Activated CD4-positive, alpha-beta T cell treated with anti-CD3 and anti-CD28 coated beads for 36 hours (primary cell): ENCODE measurements at regions of chr20 and their contacts with region 1.

Region 1: DNA sequence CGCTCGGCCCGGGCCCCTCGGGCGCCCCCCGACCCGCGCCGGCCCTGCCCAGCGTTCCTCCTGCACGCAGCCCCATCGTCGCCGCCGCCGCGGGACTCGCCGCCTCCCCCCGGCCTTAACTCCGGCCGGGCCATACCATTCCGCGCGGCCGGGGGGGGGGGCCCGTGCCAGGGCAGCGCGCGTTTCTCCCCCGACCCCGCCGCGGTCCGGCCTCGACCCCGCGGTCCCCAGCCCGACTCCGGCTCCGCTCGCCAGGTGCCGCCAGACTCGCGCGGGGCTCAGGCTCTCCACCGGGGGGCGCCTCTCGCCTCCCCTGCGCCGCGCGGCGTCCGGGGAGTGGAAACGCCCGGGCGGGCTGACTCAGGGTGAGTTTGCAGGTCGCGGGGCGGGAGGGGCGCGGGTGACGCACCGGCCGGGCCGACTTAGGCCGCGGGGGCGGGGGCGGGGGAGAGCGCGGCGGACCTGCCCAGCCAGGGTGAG is at the start of gene SRXN1:
- DNase-seq: peak; percentile 91
- ATAC-seq: peak; percentile 93
- H3K4me3 Mint-ChIP-seq: peak within 1 kb of the TSS; percentile 76
- H3K27ac Mint-ChIP-seq: peak within 1 kb of the TSS; percentile 80
- H3K4me1 Mint-ChIP-seq: peaks cover 24% of the 10 kb centered on the region
- H3K27me3 Mint-ChIP-seq: peaks cover 8% of the 10 kb centered on the region
- total RNA-seq, gene SRXN1: 12.6 to 13.5 TPM

Region 2: GRCh38 chr20:675453-676314 is 22.5 kb after region 1 on chr20 and contains the start of gene SCRT2:
- CTCF ChIA-PET with region 1: no interaction called
- POLR2A ChIA-PET with region 1: interaction called, 3 read pairs
- intact Hi-C with region 1: loop called in 1 of 2 experiments (anchors 1 kb)
- DNase-seq: peak; percentile 82
- ATAC-seq: peak; percentile 85
- H3K4me3 Mint-ChIP-seq: no peak within 1 kb of the TSS
- H3K27ac Mint-ChIP-seq: no peak within 1 kb of the TSS
- H3K4me1 Mint-ChIP-seq: peaks cover 4% of the 10 kb centered on the region
- H3K27me3 Mint-ChIP-seq: peaks cover 65% of the 10 kb centered on the region
- total RNA-seq, gene SCRT2: not detected

Region 3: DNA sequence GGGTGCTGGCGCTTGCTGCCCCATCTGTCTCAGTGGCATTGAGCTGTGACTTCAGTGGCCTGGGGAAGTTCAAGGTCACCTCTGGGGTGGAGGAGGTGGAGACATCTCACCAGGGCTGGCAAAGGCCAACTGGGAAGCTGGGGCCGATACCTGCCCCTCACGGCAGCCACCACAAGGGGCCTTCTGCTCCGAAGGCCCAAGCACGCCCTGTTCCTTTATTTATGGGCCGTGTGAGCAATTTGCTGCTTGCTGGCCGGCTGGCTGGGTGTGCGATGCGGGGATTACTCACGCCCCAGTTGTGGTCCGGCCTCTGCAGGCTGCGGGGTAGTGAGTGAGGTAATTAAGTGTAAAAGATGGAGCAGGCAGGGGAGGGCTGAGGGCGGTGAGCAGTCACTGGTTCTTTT is 35.7 kb after region 1 on chr20:
- CTCF ChIA-PET with region 1: no interaction called
- POLR2A ChIA-PET with region 1: no interaction called
- intact Hi-C with region 1: no loop called
- DNase-seq: no peak
- ATAC-seq: no peak
- H3K4me3 Mint-ChIP-seq: no peak overlapping the region
- H3K27ac Mint-ChIP-seq: no peak overlapping the region
- H3K4me1 Mint-ChIP-seq: no peaks in the 10 kb centered on the region
- H3K27me3 Mint-ChIP-seq: peaks cover 6% of the 10 kb centered on the region

Region 4: GRCh38 chr20:728248-728944 is 75.2 kb after region 1 on chr20:
- CTCF ChIA-PET with region 1: no interaction called
- POLR2A ChIA-PET with region 1: no interaction called
- intact Hi-C with region 1: loop called (anchors 1 to 5 kb)
- DNase-seq: peak; percentile 80
- ATAC-seq: peak; percentile 91
- H3K4me3 Mint-ChIP-seq: no peak overlapping the region
- H3K27ac Mint-ChIP-seq: no peak overlapping the region
- H3K4me1 Mint-ChIP-seq: no peaks in the 10 kb centered on the region
- H3K27me3 Mint-ChIP-seq: peaks cover 34% of the 10 kb centered on the region

Region 5: GRCh38 chr20:733861-734260 is 80.7 kb after region 1 on chr20:
- CTCF ChIA-PET with region 1: no interaction called
- POLR2A ChIA-PET with region 1: no interaction called
- intact Hi-C with region 1: loop called (anchors 1 to 5 kb)
- DNase-seq: no peak
- ATAC-seq: no peak
- H3K4me3 Mint-ChIP-seq: no peak overlapping the region
- H3K27ac Mint-ChIP-seq: no peak overlapping the region
- H3K4me1 Mint-ChIP-seq: no peaks in the 10 kb centered on the region
- H3K27me3 Mint-ChIP-seq: peaks cover 15% of the 10 kb centered on the region

Region 6: GRCh38 chr20:739736-740135 is 86.6 kb after region 1 on chr20:
- CTCF ChIA-PET with region 1: no interaction called
- POLR2A ChIA-PET with region 1: no interaction called
- intact Hi-C with region 1: loop called (anchors 1 to 5 kb)
- DNase-seq: no peak
- ATAC-seq: no peak
- H3K4me3 Mint-ChIP-seq: no peak overlapping the region
- H3K27ac Mint-ChIP-seq: no peak overlapping the region
- H3K4me1 Mint-ChIP-seq: no peaks in the 10 kb centered on the region
- H3K27me3 Mint-ChIP-seq: peaks cover 18% of the 10 kb centered on the region

Region 7: DNA sequence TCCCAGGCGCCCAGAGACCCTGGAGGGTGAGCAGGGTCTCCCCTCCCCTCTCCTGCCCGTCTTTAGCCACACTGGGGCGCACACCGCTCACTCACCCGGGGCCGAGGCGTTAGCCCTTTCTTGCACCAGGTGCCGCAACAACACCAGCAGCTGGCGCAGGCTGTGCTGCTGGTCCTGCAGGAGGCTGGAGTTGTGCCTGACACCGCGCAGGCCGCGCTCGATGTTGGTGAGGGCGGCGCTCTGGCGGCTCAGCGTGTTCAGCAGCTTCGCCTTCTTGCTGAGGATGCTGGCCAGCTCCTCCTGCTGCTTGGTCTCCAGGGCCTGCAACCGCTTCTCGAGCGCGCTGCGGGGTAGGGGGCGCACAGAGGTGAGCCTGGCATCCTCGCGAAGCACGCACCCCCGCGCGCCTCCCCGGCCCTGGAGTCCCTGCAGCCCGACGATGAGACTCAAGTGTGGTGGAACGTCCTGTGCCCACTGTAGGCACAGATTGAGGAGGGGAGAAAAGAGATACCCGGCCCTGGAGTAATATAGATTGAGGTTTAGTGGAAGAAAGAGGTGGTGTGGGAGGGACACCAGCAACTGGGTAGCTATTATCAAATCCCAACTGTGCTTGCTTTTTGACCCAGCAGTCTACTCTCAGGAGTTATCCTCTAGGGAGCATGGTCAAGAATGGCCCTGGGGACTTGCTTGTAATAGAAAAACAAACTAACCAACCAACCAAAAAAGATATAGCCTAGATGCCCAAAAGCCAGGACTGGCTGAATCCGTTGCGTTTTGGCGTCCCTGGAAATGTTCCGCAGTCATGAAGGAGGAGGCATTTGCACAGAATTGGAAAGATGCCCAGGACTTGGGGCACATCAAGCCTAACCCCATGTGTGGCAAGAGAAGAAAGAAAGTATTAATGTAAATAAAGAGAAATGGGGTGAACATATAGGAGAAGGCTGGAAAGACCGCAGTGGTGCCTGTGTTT is 232.1 kb after region 1 on chr20:
- CTCF ChIA-PET with region 1: no interaction called
- POLR2A ChIA-PET with region 1: no interaction called
- intact Hi-C with region 1: no loop called
- DNase-seq: peak; percentile 34
- ATAC-seq: no peak
- H3K4me3 Mint-ChIP-seq: no peak overlapping the region
- H3K27ac Mint-ChIP-seq: no peak overlapping the region
- H3K4me1 Mint-ChIP-seq: peaks cover 12% of the 10 kb centered on the region
- H3K27me3 Mint-ChIP-seq: peaks cover 16% of the 10 kb centered on the region